HEK293T (cell line): ENCODE measurements at regions of chr19 and their contacts with region 1.

Region 1: GRCh38 chr19:23249911-23250649 is at the start of gene ZNF724:
- DNase-seq: peak; percentile 82

Region 2: DNA sequence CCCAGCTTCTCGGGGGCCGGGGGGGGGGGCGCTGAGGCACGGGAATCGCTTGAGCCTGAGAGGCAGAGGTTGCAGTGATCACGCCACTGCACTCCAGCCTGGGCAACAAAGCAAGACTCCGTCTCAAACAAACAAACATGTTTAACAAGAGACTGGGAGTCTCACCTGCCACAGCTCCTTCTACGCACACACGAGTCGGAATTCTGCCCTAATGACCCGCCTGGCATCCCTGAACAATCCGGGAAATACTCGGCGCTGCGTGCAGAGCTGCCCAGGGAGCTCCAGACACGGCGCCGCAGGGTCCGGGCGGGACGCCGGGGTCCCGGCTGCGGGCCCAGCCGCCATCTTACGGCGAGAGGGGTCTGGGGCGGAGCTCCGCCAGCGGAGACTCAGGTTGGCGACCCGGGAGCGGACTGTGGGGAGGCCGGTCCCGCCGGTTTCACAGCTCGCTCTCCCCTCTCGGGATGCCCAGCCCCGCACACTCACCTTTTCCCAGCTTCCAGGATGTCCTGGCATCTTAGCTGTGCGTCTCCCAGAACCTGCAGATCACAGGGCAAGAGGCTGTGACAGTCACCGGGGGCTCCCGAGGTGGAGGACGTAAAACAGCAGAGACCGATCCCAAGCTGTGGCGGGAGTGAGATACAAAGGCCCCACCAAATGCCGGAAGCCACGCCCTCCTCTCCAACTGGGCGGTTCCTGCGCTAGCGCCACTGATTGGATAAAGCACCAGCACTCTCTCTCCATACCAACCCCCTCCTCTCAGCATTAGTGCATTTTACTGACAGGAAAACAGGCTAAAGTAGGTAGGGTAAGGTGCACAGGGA is 23.7 kb after region 1 on chr19:
- CTCF ChIA-PET with region 1: no interaction called
- POLR2A ChIA-PET with region 1: interaction called, 28 read pairs
- DNase-seq: peak; percentile 84

Region 3: DNA sequence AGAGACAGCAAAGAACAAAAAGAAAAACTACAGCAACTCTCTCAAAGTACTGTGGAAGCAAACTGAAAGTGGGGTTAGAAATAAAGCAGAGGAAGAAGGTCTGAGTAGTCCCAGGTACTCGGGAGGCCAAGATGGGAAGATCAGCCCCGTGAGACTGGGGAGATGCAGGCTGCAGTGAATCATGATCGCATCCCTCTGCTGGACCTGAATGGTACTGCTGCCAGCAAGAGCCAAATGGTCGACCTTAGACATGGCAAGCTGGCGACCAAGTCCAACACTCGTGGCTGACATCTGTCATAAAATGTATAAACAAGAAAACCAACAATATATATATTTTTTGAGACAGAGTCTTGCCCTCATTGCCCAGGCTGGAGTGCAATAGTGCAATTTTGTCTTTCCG is 33.8 kb after region 1 on chr19:
- CTCF ChIA-PET with region 1: no interaction called
- POLR2A ChIA-PET with region 1: no interaction called
- DNase-seq: peak; percentile 49

Region 4: DNA sequence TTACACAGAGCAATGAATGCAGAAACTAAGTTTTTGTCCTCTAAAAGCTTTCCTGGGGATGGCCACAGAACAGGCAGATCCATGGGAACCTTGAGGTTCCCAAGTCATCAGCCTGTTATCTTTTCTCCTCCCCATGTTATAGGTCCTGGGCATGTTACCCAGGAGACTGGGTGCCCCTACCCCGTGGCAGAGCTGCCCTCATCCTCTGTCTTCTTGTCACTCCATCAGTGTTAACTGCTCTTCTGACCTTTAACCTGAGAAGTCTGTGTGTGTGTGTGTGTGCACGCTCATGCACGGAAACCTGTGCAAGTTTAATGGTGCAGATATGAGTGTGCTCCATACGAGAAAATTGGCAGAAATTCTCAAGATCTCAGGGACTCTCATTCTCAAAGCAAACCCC is 44.1 kb after region 1 on chr19:
- CTCF ChIA-PET with region 1: no interaction called
- POLR2A ChIA-PET with region 1: no interaction called
- DNase-seq: no peak

Region 5: GRCh38 chr19:23365222-23365621 is 115.1 kb after region 1 on chr19:
- CTCF ChIA-PET with region 1: no interaction called
- POLR2A ChIA-PET with region 1: no interaction called
- DNase-seq: no peak